A673 (cell line): ENCODE measurements at regions of chr2 and their contacts with region 1.

Region 1: GRCh38 chr2:96241900-96242611 is 23.7 kb downstream of the TMEM127 start:
- DNase-seq: peak; percentile 43
- H3K4me3 ChIP-seq: no peak overlapping the region
- H3K27ac ChIP-seq: peak overlapping the region; percentile 67
- H3K4me1 ChIP-seq: peaks cover 7% of the 10 kb centered on the region
- H3K27me3 ChIP-seq: no peaks in the 10 kb centered on the region
- CTCF ChIP-seq: no peak

Region 2: GRCh38 chr2:96164459-96165184 is 77.4 kb before region 1 on chr2:
- CTCF ChIA-PET with region 1: no interaction called
- POLR2A ChIA-PET with region 1: no interaction called
- intact Hi-C with region 1: no loop called
- DNase-seq: no peak
- H3K4me3 ChIP-seq: no peak overlapping the region
- H3K27ac ChIP-seq: no peak overlapping the region
- H3K4me1 ChIP-seq: peaks cover 6% of the 10 kb centered on the region
- H3K27me3 ChIP-seq: no peaks in the 10 kb centered on the region
- CTCF ChIP-seq: no peak

Region 3: GRCh38 chr2:96208143-96209010 is 33.7 kb before region 1 on chr2 and contains the start of gene STARD7:
- CTCF ChIA-PET with region 1: interaction called, 10 read pairs
- POLR2A ChIA-PET with region 1: no interaction called
- intact Hi-C with region 1: no loop called
- DNase-seq: peak; percentile 98
- H3K4me3 ChIP-seq: peak within 1 kb of the TSS; percentile 80
- H3K27ac ChIP-seq: peak within 1 kb of the TSS; percentile 85
- H3K4me1 ChIP-seq: peaks cover 21% of the 10 kb centered on the region
- H3K27me3 ChIP-seq: no peaks in the 10 kb centered on the region
- CTCF ChIP-seq: no peak
- total RNA-seq, gene STARD7: 189 and 201 TPM in 2 replicates

Region 4: GRCh38 chr2:96254571-96254970 is 12.5 kb after region 1 on chr2:
- CTCF ChIA-PET with region 1: no interaction called
- POLR2A ChIA-PET with region 1: no interaction called
- intact Hi-C with region 1: no loop called
- DNase-seq: no peak
- H3K4me3 ChIP-seq: no peak overlapping the region
- H3K27ac ChIP-seq: no peak overlapping the region
- H3K4me1 ChIP-seq: no peaks in the 10 kb centered on the region
- H3K27me3 ChIP-seq: no peaks in the 10 kb centered on the region
- CTCF ChIP-seq: no peak